ENCODE measurements at regions of chr11 and their contacts with region 1.

Region 1: GRCh38 chr11:84384731-84385130 is 1098.6 kb upstream of the CCDC90B start:
- DNase-seq: peak in 1 of 2 experiments; percentile 66
- H3K4me3 ChIP-seq: no peak overlapping the region
- H3K27ac ChIP-seq: no peak overlapping the region
- H3K4me1 ChIP-seq: no peaks in the 10 kb centered on the region
- H3K27me3 ChIP-seq: no peaks in the 10 kb centered on the region
- CTCF ChIP-seq: peak in 2 of 3 experiments; percentile 73 to 80; a peak in 3 of 4 replicates
- EP300 ChIP-seq: no peak
- POLR2A ChIP-seq: no peak
- RAD21 ChIP-seq: peak; percentile 69 to 77

Region 2: DNA sequence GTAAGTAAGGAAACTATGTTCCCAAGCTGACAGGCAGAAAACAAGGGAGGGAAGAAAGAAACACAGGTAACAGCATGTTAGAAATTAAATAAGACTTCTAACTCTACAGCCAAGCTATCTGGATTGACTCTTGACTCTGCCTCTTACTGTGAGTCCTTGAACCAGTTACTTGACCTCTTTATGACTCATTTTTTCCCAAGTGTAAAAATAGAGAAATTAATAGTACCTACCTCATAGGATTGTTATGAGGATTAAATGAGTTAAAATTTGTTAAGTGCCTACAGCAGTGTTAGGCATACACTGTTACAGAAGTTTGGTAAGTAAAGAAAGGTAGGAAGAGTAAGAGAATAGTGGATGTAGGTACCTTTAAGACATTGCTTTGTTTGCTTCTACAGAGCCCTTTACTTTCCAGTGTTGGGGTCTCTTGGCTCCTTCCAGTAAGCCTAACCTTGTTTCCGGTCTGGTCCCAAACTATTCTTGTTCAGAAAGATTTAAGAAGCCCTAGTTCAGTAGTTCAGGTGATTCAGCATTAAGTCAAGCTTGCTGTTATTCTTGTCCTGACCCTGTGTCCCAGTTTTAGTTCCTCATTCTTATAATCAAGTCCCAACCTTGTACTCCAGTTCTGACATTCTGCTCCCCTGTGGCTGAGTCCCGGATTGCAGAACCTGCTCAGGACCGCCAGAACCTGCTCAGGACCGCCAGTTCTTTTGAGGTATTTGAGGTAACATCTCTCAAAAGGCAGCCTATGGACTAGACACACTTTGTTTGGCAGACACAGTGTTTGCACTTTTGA is 135.2 kb before region 1 on chr11:
- CTCF ChIA-PET with region 1: no interaction called
- POLR2A ChIA-PET with region 1: no interaction called
- DNase-seq: no peak
- H3K4me3 ChIP-seq: no peak overlapping the region
- H3K27ac ChIP-seq: no peak overlapping the region
- H3K4me1 ChIP-seq: no peaks in the 10 kb centered on the region
- H3K27me3 ChIP-seq: no peaks in the 10 kb centered on the region
- CTCF ChIP-seq: no peak
- EP300 ChIP-seq: no peak
- POLR2A ChIP-seq: no peak
- RAD21 ChIP-seq: no peak

Region 3: DNA sequence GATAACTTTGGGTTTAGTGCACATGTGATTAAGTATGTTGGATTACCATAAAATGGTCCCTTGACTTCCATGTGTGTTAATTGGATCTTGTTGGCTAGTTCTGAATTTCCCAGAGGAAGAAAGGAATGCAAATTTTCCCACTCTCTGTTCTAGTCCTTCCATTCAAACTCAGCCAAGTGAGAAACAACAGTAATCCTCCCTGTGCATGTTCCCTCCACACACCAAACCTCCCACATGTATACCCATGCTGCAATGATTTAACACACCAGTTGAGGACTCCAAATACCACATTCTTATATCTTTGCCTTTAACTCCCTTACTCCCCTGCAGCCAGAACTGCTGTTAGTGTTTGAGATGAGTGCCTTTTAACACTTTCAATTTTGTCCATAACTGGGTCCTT is 83.5 kb after region 1 on chr11:
- CTCF ChIA-PET with region 1: no interaction called
- POLR2A ChIA-PET with region 1: no interaction called
- DNase-seq: no peak
- H3K4me3 ChIP-seq: no peak overlapping the region
- H3K27ac ChIP-seq: no peak overlapping the region
- H3K4me1 ChIP-seq: peaks cover 0 to 10% (median 3%) of the 10 kb centered on the region in 4 experiments; a peak in 3 of 7 replicates
- H3K27me3 ChIP-seq: peaks cover 0 to 1% (median 0%) of the 10 kb centered on the region in 4 experiments; a peak in 1 of 7 replicates
- CTCF ChIP-seq: no peak
- EP300 ChIP-seq: no peak
- POLR2A ChIP-seq: no peak
- RAD21 ChIP-seq: no peak

Region 4: DNA sequence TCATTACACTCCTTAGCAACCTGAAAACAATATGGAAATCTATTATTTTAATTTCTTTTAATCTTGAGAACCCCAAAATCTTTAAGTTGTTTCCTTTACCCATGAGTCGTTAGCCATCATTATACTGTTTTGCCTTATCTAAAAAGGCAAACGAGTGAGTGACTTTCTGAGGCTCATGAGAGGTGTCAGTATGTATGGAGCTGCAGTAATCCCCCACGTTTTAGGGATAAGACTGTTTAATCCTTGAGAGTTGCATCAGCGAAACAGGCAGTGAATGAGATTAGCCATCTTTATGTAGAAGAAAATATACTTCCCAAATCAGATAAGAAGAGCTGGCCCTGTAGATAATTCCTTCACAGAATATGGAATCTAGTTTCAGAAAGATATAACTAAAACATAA is 95.4 kb after region 1 on chr11:
- CTCF ChIA-PET with region 1: no interaction called
- POLR2A ChIA-PET with region 1: no interaction called
- DNase-seq: no peak
- H3K4me3 ChIP-seq: no peak overlapping the region
- H3K27ac ChIP-seq: no peak overlapping the region
- H3K4me1 ChIP-seq: no peaks in the 10 kb centered on the region
- H3K27me3 ChIP-seq: no peaks in the 10 kb centered on the region
- CTCF ChIP-seq: no peak
- EP300 ChIP-seq: no peak
- POLR2A ChIP-seq: no peak
- RAD21 ChIP-seq: no peak

Region 5: DNA sequence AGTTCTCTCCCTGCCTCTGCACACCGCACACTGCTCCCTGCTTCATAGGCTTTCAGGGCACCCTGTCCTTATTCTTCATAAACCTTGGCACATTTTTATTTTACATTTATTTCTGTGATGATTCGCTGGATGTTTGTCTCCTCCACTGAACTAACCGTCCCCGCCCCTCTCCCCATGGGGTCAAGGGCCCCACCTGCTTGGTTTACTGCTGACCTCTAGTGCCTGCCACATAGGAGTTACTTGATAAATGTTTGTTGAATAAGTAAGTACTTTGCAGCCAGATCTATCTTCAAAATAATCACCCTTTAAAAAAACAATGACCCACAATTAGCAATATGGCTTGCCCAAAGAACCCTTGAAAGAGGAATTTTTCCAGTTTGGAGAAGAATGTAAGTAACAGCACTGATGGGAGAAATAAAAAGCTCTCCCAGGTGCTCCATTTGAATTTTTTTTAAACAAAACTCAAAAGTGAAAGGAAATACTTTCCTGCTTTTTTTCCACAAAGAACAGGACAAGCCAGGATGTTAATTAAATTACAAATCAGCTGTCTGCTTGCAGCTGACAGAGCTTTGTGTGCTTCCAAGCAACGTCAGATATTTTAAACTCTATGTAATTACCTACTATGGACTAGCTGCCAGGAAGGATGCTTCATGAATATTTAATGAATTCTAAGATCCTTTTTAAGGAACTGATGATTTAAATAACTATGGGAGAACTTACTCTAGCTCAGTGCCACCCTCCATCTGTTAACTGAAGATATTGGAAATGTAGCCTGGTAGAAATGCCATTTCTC is 158.8 kb after region 1 on chr11:
- CTCF ChIA-PET with region 1: interaction called, 84 read pairs
- POLR2A ChIA-PET with region 1: no interaction called
- DNase-seq: peak; percentile 43 to 88
- H3K4me3 ChIP-seq: peak overlapping the region in 2 of 4 experiments; percentile 16 to 43; a peak in 4 of 8 replicates
- H3K27ac ChIP-seq: peak overlapping the region; percentile 27
- H3K4me1 ChIP-seq: peaks cover 0 to 14% (median 8%) of the 10 kb centered on the region in 4 experiments; a peak in 4 of 7 replicates
- H3K27me3 ChIP-seq: no peaks in the 10 kb centered on the region
- CTCF ChIP-seq: peak; percentile 27 to 59 (median 47)
- EP300 ChIP-seq: no peak; a peak in 1 of 3 replicates
- POLR2A ChIP-seq: no peak
- RAD21 ChIP-seq: peak; percentile 72 to 81

Region 6: DNA sequence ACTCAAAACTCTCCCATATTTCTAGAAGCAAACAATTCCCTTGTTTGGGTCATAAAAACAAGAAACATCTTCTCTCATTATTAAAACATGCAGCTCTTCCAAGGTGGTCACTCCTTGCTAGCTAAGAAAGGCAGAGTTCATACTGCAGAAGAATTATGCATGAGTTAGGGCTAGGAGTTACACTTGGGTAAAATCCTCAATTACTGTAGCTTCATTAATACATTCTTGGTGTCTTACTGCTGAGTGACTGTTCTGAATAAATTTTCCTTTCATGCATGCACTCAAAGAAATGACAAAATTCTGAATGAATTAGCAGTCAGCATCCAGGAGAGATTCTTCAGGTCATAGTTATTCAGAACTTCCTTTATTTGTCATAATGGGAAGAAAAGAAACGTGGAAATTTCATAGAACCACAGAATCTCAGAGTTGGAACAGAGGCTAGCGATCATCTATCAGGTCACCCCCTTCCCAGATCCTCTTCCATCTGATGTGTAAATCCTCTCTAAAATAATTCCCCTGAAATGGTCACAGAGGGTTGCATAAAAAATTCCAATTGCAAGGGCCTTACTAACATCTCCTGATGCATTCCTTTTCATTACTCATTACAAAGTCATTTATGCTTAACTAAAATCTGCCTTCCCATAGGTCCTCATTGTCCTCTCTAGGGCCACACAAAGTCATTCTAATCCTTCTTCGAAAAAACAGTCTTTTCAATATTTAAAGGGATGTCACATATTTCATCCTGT is 470.9 kb after region 1 on chr11:
- CTCF ChIA-PET with region 1: no interaction called
- POLR2A ChIA-PET with region 1: no interaction called
- DNase-seq: no peak
- H3K4me3 ChIP-seq: no peak overlapping the region
- H3K27ac ChIP-seq: no peak overlapping the region
- H3K4me1 ChIP-seq: no peaks in the 10 kb centered on the region
- H3K27me3 ChIP-seq: no peaks in the 10 kb centered on the region
- CTCF ChIP-seq: no peak
- EP300 ChIP-seq: no peak
- POLR2A ChIP-seq: no peak
- RAD21 ChIP-seq: no peak